Calu3 (cell line): ENCODE measurements at regions of chr7 and their contacts with region 1.

Region 1: GRCh38 chr7:116671681-116672595 is at the start of gene MET:
- DNase-seq: peak; percentile 94
- H3K4me3 Mint-ChIP-seq: peak within 1 kb of the TSS; percentile 74
- H3K27ac Mint-ChIP-seq: peak within 1 kb of the TSS; percentile 92
- H3K4me1 Mint-ChIP-seq: peaks cover 27% of the 10 kb centered on the region
- H3K27me3 Mint-ChIP-seq: no peaks in the 10 kb centered on the region
- CTCF ChIP-seq: peak; percentile 52
- total RNA-seq, gene MET: 242 and 249 TPM in 2 replicates

Region 2: GRCh38 chr7:116211006-116211912 is 460.7 kb before region 1 on chr7:
- CTCF ChIA-PET with region 1: no interaction called
- intact Hi-C with region 1: loop called (anchors 10 kb)
- DNase-seq: peak; percentile 90
- H3K4me3 Mint-ChIP-seq: peak overlapping the region; percentile 98
- H3K27ac Mint-ChIP-seq: peak overlapping the region; percentile 99
- H3K4me1 Mint-ChIP-seq: peaks cover 40% of the 10 kb centered on the region
- H3K27me3 Mint-ChIP-seq: no peaks in the 10 kb centered on the region
- CTCF ChIP-seq: no peak

Region 3: DNA sequence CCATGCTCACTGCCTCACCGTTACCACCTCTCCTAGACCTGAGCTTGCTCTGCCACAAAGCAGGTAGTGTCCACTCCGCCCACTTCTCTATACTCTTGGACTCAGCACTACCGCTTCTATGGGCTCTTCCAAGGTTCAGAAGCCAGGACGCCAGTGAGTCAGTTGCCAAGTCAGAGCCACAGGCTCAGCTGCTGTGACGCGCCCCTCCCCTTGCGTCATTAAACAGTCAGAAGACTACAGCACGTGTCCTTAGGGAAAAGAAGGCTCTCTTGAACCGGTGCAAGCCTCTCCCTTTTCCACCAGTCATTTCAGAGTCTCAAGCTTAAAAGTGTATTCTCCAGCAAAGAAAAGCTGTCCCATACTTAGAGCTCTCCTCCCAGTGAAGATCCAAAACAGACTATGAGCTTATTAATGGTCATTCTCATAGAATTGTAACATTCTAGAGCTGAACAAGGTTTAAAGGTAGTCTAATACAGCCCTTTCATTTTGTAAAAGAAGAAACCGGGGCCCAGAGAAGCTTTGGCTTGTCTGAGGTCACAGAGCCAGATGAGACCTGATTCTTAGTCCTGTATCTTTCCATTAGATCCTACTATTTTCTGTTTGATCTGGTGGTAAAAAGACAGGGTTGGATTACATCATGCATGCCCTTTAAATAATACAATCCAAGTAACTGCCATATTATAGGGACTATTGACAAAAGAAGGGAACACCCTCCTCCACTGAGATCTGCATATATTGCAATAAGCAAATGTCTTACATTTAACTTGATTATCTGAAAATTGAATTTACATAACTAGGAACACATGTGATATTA is 40.8 kb before region 1 on chr7:
- CTCF ChIA-PET with region 1: interaction called, 8 read pairs
- intact Hi-C with region 1: loop called (anchors 1 kb)
- DNase-seq: peak; percentile 88
- H3K4me3 Mint-ChIP-seq: peak overlapping the region; percentile 49
- H3K27ac Mint-ChIP-seq: peak overlapping the region; percentile 88
- H3K4me1 Mint-ChIP-seq: peaks cover 35% of the 10 kb centered on the region
- H3K27me3 Mint-ChIP-seq: no peaks in the 10 kb centered on the region
- CTCF ChIP-seq: no peak

Region 4: GRCh38 chr7:116687801-116688201 is 15.9 kb after region 1 on chr7:
- CTCF ChIA-PET with region 1: interaction called, 8 read pairs
- intact Hi-C with region 1: loop called (anchors 2 kb)
- DNase-seq: peak; percentile 45
- H3K4me3 Mint-ChIP-seq: peak overlapping the region; percentile 51
- H3K27ac Mint-ChIP-seq: peak overlapping the region; percentile 68
- H3K4me1 Mint-ChIP-seq: peaks cover 85% of the 10 kb centered on the region
- H3K27me3 Mint-ChIP-seq: no peaks in the 10 kb centered on the region
- CTCF ChIP-seq: no peak

Region 5: GRCh38 chr7:116717137-116717536 is 45.2 kb after region 1 on chr7:
- CTCF ChIA-PET with region 1: interaction called, 14 read pairs
- intact Hi-C with region 1: no loop called
- DNase-seq: no peak
- H3K4me3 Mint-ChIP-seq: peak overlapping the region; percentile 32
- H3K27ac Mint-ChIP-seq: peak overlapping the region; percentile 54
- H3K4me1 Mint-ChIP-seq: peaks cover 47% of the 10 kb centered on the region
- H3K27me3 Mint-ChIP-seq: no peaks in the 10 kb centered on the region
- CTCF ChIP-seq: no peak

Region 6: GRCh38 chr7:116809636-116810266 is 137.8 kb after region 1 on chr7:
- CTCF ChIA-PET with region 1: interaction called, 6 read pairs
- intact Hi-C with region 1: loop called (anchors 1 kb)
- DNase-seq: peak; percentile 57
- H3K4me3 Mint-ChIP-seq: peak overlapping the region; percentile 36
- H3K27ac Mint-ChIP-seq: peak overlapping the region; percentile 64
- H3K4me1 Mint-ChIP-seq: peaks cover 64% of the 10 kb centered on the region
- H3K27me3 Mint-ChIP-seq: no peaks in the 10 kb centered on the region
- CTCF ChIP-seq: peak; percentile 30